Motor neuron (in vitro differentiated cells): ENCODE measurements at regions of chr1 and their contacts with region 1.

Region 1: DNA sequence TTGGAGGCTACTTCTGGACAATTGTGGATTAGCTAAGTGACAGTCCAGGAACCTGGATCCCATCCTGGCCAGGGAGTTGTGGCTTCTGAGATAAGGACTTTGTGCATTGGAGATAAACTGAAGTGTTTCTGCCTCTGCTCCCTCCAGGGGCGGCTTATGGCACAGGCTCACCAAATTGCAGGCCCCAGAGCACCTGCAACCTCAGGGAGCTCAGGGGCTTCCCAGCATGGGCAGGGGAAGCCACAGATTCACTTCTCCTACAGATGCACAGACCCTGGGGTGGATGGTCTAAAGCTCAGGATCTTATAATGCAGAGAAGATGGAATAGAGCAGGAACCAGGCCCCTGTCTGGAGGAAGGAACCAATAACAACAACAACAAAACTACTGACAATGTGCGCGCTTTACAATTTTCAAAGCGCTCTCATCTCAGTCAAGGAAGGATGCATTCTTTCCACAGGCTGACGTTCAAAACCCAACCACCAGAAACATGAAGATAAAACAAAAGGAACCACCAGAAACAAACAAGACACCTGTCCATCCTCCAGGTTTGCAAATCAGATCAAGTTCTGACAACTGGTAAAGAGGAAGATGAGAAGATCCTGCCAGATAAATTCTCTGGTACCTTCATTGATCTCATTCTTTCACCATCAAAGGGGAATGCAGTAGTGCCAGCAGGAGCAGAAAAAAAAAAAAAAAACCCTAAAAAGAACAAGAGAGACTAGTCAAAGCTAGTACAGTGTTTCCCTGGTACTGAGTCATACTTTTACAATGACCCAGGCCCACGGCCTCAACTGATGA is 121.0 kb upstream of the IRF2BP2 start:
- ATAC-seq: peak; percentile 44 to 84 (median 78)
- H3K4me3 ChIP-seq: no peak overlapping the region
- H3K27ac ChIP-seq: no peak overlapping the region
- H3K4me1 ChIP-seq: peaks cover 34 to 49% of the 10 kb centered on the region in 2 donors

Region 2: DNA sequence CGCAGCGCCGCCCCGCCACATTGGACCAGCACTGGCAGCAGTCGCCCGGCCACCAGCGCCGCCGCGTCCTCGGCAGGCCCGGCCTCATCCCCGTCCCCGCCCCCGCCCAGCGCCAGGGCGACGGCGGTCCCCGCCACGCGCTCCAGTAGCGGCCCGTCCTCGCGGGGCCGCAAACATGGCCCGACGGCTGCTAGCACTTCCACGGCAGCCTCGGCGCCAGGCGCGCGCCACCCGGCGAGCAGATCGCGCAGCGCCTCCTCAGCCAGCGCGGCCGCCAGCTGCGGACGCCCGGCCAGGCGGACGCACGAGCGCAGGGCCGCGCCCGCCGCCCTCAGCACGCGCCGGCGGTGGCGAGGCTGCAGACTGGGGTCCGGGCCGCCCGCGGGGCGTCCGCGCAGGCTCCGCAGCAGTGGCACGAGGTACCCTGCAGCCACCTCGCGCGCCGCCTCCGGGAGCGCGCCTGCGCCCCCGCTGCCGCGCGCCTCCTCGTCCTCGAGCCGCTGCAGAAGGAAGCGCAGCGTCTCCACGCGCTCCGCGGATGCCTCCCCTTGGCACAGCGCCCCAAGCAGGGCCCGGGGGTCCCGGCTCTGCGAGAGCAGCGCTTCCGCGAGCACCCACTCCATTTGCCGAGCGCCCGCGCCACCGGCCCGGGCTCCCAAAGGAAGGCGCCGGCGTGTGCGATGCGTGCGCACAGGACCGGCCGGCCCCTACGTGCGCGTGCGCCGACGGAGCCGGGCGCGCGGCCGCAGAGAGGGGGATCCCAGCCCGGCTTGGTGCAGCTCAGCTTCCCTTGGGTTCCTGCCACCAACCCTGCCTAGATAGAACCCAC is 252.3 kb before region 1 on chr1 and contains the start of gene TARBP1:
- in situ Hi-C with region 1: loop called in 3 of 9 experiments (anchors 25 kb)
- ATAC-seq: peak; percentile 81 to 90 (median 88)
- H3K4me3 ChIP-seq: peak within 1 kb of the TSS; percentile 57 to 77 (median 65)
- H3K27ac ChIP-seq: peak within 1 kb of the TSS; percentile 90 to 95
- H3K4me1 ChIP-seq: peaks cover 10 to 17% of the 10 kb centered on the region in 2 donors
- total RNA-seq, gene TARBP1: 23.4 to 71.7 (median 42.6) TPM

Region 3: GRCh38 chr1:234842726-234843641 is 112.0 kb after region 1 on chr1:
- in situ Hi-C with region 1: loop called in 4 of 9 experiments (anchors 25 kb)
- ATAC-seq: peak in 5 of 8 experiments; percentile 60 to 79 (median 67)
- H3K4me3 ChIP-seq: no peak overlapping the region
- H3K27ac ChIP-seq: no peak overlapping the region
- H3K4me1 ChIP-seq: peaks cover 15 to 18% of the 10 kb centered on the region in 2 donors

Region 4: DNA sequence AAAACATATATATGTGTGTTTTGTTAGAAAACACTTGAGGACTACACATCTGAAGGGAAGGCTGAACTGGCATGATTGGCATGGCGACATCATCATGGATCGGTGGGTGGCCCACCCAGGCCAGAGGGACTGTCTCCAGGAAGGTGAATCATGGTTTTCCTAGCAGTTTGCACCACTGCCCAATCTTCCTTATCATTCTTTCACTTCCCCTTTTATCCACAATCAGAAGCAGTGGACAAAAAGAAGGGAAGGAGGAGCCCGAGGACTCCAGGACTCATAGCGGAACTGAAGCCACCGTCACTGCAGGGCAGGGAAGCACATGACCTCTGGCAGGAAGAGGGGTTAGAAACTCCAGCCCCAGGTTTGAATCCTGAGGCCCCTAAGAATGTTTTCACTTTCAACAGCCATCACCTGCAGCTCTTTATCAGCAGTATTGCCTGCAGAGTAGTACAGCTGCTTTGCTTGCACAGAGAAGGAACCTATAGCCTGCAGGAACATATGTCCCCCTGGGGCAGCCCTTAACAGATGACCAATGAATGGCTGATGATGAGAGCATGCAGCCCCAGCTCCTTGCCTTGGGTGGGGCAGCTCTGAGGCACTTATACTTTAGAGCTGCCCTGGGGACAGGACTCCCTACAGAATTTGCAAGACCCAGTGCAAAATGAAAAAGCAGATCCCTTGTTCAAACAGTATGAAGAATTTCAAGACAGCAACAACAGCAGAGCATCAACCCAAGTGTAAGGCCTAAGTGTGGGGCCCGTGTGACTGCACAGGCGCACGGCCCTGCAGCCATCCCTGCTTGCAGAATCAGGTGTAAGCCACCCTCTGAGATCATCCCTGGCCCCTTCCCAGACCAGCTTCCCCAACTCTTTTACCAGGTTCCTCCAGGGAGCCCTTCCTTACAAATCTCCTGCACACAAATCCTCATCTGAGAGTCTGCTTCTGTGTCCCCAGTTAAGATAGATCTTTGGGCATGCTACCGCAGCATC is 120.8 kb after region 1 on chr1:
- in situ Hi-C with region 1: loop called in 5 of 9 experiments (anchors 25 kb)
- ATAC-seq: peak; percentile 45 to 91 (median 75)
- H3K4me3 ChIP-seq: no peak overlapping the region
- H3K27ac ChIP-seq: no peak overlapping the region
- H3K4me1 ChIP-seq: peaks cover 23 to 25% of the 10 kb centered on the region in 2 donors

Region 5: DNA sequence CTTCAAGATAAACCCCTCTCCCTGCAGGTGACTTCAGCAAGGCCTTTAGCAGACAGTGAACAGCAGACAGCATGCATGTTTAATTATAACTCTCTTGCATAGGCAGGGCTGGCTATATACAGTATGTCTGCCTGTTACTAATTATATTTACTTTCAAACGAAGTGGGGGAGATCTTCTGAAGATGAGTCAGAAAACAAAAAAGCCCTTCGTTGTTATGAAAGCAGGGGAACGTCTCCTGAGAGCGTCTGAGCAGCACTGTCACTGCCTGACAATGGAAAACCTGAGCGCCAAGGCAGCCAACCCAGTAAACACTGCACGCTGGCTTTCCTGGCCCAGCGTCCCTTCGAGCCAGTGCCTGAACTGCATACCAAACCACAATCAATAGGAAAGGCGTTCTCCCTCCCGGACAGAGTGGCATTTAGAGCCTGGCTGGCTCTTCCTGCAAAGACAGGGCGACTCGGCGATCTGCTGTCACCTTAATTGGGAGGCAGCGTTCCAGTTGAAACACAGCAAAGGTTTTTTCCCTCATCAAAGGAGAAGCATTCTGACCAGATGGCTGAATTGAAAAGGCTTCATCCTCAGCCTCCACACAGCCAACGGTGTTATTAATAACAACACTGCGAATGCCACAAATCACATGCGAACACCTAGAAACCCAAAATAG is 343.7 kb after region 1 on chr1:
- in situ Hi-C with region 1: loop called in 7 of 9 experiments (anchors 25 kb)
- ATAC-seq: peak; percentile 44 to 86 (median 78)
- H3K4me3 ChIP-seq: no peak overlapping the region
- H3K27ac ChIP-seq: peak overlapping the region; percentile 75
- H3K4me1 ChIP-seq: peaks cover 27 to 35% of the 10 kb centered on the region in 2 donors